Right lobe of liver (tissue), 6 donors: ENCODE measurements at regions of chr18 and their contacts with region 1.

Region 1: GRCh38 chr18:62982600-62983251 is 267.4 kb downstream of the PHLPP1 start:
- DNase-seq: peak in 1 of 3 donors; percentile 60
- ATAC-seq: peak; percentile 70 to 78 (median 72)
- H3K4me3 ChIP-seq: peak overlapping the region in 1 of 3 donors; percentile 17
- H3K27ac ChIP-seq: no peak overlapping the region
- H3K4me1 ChIP-seq: peaks cover 0 to 6% (median 0%) of the 10 kb centered on the region in 4 donors
- H3K27me3 ChIP-seq: no peaks in the 10 kb centered on the region
- CTCF ChIP-seq: peak; percentile 72 to 79 (median 76)
- POLR2A ChIP-seq: no peak

Region 2: DNA sequence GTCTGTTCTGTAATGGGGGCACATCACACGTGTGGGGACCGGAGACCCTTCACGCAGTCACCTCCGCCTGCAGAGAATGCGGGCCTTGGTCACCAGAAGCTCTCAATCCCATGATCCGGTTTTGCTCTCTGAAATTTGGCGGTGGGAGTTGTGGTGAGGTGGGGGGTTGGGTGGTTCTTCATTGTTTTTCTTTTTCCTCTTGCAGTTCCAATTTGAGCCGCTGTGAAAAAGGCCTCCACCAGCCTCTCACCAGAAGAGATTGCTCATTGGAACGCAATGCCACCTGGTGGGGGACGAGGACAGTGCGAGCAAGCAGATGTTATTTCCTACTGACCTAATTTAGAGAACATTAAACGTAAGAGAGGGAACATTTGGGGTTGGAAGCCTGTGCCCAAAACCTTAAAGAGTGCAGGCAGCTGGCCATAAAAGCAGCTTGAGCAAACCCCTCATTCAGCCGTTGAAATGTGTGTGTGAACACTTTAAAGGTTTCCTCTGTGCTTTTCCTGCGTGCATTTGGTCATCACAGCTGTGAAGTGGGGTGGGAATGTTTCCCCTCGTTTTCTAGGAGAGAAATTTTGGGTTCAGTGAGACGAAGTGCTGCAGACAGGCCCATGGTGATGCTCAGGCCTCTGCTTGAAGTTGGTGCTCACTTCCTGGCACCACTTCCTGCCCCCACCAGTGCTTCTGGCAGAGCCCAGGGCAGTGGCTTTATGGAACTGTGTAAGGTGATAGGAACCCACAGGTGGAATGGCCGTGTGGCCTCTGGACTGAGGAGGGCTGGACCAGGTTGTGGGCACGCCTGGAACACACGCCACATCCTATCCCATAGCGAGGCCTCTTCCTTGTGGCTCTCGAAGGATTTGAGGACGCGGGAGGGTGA is 398.2 kb before region 1 on chr18:
- intact Hi-C with region 1: loop called in 1 of 2 experiments (anchors 10 kb)
- DNase-seq: peak; percentile 74 to 79 (median 75)
- ATAC-seq: peak; percentile 89 to 96 (median 94)
- H3K4me3 ChIP-seq: no peak overlapping the region
- H3K27ac ChIP-seq: no peak overlapping the region
- H3K4me1 ChIP-seq: peaks cover 0 to 10% (median 3%) of the 10 kb centered on the region in 4 donors
- H3K27me3 ChIP-seq: no peaks in the 10 kb centered on the region
- CTCF ChIP-seq: peak; percentile 85 to 98 (median 95)
- POLR2A ChIP-seq: no peak

Region 3: DNA sequence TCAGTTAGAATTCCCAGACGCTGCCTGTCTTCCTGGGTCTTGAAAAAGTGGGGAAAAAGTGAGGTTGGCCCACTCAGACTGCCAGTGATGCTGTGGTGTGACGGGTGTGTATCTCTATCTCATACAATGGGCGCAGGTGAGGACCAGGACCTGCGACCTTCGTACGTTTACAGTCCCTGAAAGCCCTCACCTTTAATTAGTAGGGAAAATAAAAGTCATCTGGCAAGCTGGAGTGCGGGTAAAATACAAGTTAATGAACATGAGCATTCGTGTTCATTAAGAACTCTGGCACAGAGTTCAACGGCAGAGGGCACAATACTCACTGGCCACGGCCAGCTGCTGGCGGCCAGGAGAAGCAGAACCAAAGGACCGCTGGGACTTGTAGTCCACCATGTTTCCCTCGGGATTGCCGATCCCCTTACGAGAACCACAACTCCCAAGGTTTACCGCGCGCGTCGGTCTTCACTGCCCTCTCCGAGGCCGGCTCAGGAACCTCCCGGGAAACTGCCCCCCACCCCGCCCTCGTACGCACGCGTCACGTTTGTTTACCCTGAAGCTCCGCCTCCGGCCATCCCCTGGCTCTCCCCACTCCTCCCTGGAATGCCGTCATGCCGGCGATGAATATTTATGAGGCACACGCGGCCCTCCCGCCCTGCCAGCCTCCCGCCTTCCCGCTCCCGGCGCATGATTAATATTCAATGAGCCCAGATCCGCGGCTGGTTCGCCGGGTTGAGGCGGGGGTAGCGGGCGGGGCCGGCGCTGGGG is 267.9 kb before region 1 on chr18:
- intact Hi-C with region 1: loop called (anchors 5 to 10 kb)
- DNase-seq: peak; percentile 100
- ATAC-seq: peak; percentile 89 to 94 (median 90)
- H3K4me3 ChIP-seq: peak overlapping the region; percentile 46 to 73 (median 60)
- H3K27ac ChIP-seq: peak overlapping the region; percentile 85 to 95 (median 89)
- H3K4me1 ChIP-seq: peaks cover 0 to 18% (median 5%) of the 10 kb centered on the region in 4 donors
- H3K27me3 ChIP-seq: no peaks in the 10 kb centered on the region
- CTCF ChIP-seq: peak; percentile 74 to 84 (median 82)
- POLR2A ChIP-seq: no peak